H1 (cell line): ENCODE measurements at regions of chr6 and their contacts with region 1.

Region 1: GRCh38 chr6:44304282-44305199 is 8.6 kb downstream of the AARS2 start:
- DNase-seq: peak in 1 of 2 experiments; percentile 80
- H3K4me3 ChIP-seq: no peak overlapping the region
- H3K27ac ChIP-seq: no peak overlapping the region
- H3K4me1 ChIP-seq: peaks cover 0 to 4% (median 0%) of the 10 kb centered on the region in 4 experiments; a peak in 1 of 7 replicates
- H3K27me3 ChIP-seq: no peaks in the 10 kb centered on the region
- CTCF ChIP-seq: peak in 2 of 3 experiments; percentile 88 to 95; a peak in 3 of 4 replicates
- EP300 ChIP-seq: no peak
- POLR2A ChIP-seq: no peak
- RAD21 ChIP-seq: peak; percentile 72 to 77

Region 2: DNA sequence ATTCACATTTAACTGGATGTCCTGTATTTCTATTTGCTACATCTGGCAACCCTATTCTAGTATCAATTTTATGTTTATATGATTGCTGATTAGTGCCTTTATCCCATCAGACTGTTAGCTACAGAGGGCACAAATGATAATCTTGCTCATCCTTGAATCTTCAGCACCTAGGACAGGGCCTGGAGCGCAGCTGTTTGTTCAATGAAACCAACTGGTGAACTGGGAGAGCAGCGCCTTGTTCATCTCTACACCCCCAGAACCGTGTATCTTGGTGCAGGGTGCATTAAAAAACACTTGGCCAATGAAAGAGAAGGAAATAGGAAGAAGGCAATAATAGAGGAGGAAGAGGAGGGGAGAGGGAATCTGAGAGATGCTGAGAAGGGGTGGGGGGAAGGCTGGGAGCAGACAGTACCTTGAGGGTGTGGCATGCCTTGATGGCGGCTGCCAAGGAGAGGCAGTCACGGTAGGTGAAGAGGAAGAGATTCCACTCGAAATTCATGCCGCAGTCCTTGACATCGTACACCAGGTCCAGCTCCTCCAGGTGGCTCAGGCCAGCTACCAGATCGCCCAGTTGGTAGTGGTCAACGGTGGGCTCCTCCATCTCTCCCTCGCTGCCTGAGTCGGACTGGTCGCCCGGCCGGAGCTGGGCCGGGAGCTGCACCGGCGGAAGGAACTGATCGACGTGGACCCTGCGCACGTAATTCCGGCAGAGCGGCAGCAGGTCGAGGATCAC is 18.8 kb before region 1 on chr6:
- CTCF ChIA-PET with region 1: interaction called, 26 read pairs
- POLR2A ChIA-PET with region 1: interaction called, 48 read pairs
- DNase-seq: peak in 1 of 2 experiments; percentile 65
- H3K4me3 ChIP-seq: no peak overlapping the region
- H3K27ac ChIP-seq: no peak overlapping the region
- H3K4me1 ChIP-seq: no peaks in the 10 kb centered on the region
- H3K27me3 ChIP-seq: peaks cover 0 to 4% (median 1%) of the 10 kb centered on the region in 4 experiments; a peak in 3 of 7 replicates
- CTCF ChIP-seq: no peak
- EP300 ChIP-seq: no peak
- POLR2A ChIP-seq: no peak
- RAD21 ChIP-seq: no peak

Region 3: DNA sequence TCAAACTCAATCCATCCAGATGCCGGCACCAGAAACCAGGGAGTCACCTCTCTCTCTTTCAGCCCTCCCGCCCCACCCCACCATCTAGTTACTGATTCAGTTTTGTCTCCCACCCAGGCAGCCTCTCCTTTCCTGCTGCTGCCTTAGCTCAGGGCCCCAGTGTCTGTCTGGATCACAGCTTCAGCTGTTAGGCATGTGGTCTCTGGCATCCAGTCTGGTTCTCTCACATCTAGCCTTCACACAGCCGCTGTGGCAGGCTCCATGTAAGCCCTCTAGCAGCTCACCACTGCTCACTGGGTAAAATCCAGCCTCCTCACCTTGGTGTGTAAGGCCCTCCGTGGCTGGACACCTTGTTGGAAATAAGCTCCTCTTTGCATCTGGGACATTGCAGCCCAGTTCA is 12.7 kb before region 1 on chr6:
- CTCF ChIA-PET with region 1: interaction called, 69 read pairs
- POLR2A ChIA-PET with region 1: interaction called, 81 read pairs
- DNase-seq: no peak
- H3K4me3 ChIP-seq: no peak overlapping the region
- H3K27ac ChIP-seq: no peak overlapping the region
- H3K4me1 ChIP-seq: no peaks in the 10 kb centered on the region; a peak in 2 of 7 replicates
- H3K27me3 ChIP-seq: peaks cover 0 to 20% (median 12%) of the 10 kb centered on the region in 4 experiments; a peak in 6 of 7 replicates
- CTCF ChIP-seq: no peak
- EP300 ChIP-seq: no peak
- POLR2A ChIP-seq: no peak
- RAD21 ChIP-seq: no peak

Region 4: DNA sequence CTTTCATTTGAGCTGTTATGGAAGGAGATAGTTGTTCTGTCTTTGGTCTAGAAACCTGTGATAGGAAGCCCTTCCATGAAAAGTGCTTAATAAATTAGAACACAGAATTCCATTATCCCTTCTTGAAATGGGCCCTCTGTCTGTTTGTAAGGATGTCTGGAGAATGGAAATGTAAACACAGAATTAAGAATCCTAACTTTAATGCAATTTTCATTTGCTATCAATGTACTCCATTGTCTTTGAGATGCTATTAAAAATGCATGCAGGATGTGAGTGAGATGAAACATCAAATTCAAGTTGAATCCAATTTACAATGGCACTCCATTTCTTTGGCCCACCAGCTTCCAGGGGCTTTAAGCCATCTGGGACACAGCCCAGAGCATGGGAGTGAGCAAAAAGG is 22.6 kb after region 1 on chr6:
- CTCF ChIA-PET with region 1: interaction called, 108 read pairs
- POLR2A ChIA-PET with region 1: interaction called, 3 read pairs
- DNase-seq: no peak
- H3K4me3 ChIP-seq: no peak overlapping the region
- H3K27ac ChIP-seq: no peak overlapping the region
- H3K4me1 ChIP-seq: peaks cover 0 to 11% (median 6%) of the 10 kb centered on the region in 4 experiments; a peak in 4 of 7 replicates
- H3K27me3 ChIP-seq: no peaks in the 10 kb centered on the region; a peak in 1 of 7 replicates
- CTCF ChIP-seq: no peak
- EP300 ChIP-seq: no peak
- POLR2A ChIP-seq: no peak
- RAD21 ChIP-seq: no peak